Left cardiac atrium (tissue), 4 donors: ENCODE measurements at regions of chr3 and their contacts with region 1.

Region 1: GRCh38 chr3:149480325-149481017 is 6.0 kb downstream of the TM4SF4 start:
- DNase-seq: peak; percentile 83
- ATAC-seq: peak; percentile 95 to 97

Region 2: GRCh38 chr3:149129326-149130205 is 350.9 kb before region 1 on chr3 and contains the start of gene HPS3:
- intact Hi-C with region 1: loop called in 1 of 2 experiments (anchors 10 kb)
- DNase-seq: peak; percentile 95
- ATAC-seq: peak; percentile 99
- total RNA-seq, gene HPS3: 7.7 to 9.7 TPM

Region 3: GRCh38 chr3:149203758-149204157 is 276.7 kb before region 1 on chr3:
- intact Hi-C with region 1: no loop called
- DNase-seq: no peak
- ATAC-seq: no peak

Region 4: DNA sequence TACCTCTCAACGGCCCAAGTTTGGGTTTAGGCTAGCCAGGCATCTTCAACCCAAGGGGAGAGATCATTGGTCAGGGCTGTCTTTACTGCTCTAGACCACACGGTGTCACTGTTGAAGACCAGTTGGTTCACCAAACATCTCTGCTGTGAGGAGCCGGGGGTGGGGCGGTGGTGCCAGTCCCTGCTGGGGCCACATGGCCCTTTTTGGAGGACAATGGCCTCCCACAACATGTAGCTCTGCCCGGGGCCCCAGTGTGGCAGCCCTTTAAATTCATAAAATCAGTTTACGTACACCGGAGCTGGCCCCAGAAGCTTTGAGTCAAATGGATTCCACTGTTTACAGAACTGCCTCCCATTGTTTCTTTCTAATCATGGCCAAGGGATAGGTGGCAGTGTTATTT is 127.9 kb before region 1 on chr3:
- intact Hi-C with region 1: loop called in 1 of 2 experiments (anchors 2 kb)
- DNase-seq: peak; percentile 63
- ATAC-seq: peak; percentile 55 to 86

Region 5: GRCh38 chr3:149393345-149394160 is 86.9 kb before region 1 on chr3:
- intact Hi-C with region 1: loop called (anchors 5 kb)
- DNase-seq: peak; percentile 72
- ATAC-seq: peak; percentile 63 to 67